ENCODE measurements at regions of chr9 and their contacts with region 1.

Region 1: GRCh38 chr9:126482361-126483044 is 131.2 kb upstream of the LMX1B start:
- DNase-seq: no peak
- ATAC-seq: no peak
- H3K4me3 ChIP-seq: no peak overlapping the region
- H3K27ac ChIP-seq: no peak overlapping the region
- H3K4me1 ChIP-seq: no peaks in the 10 kb centered on the region
- H3K27me3 ChIP-seq: peaks cover 0 to 3% of the 10 kb centered on the region in 2 experiments
- CTCF ChIP-seq: no peak
- EP300 ChIP-seq: no peak
- POLR2A ChIP-seq: no peak
- RAD21 ChIP-seq: no peak

Region 2: DNA sequence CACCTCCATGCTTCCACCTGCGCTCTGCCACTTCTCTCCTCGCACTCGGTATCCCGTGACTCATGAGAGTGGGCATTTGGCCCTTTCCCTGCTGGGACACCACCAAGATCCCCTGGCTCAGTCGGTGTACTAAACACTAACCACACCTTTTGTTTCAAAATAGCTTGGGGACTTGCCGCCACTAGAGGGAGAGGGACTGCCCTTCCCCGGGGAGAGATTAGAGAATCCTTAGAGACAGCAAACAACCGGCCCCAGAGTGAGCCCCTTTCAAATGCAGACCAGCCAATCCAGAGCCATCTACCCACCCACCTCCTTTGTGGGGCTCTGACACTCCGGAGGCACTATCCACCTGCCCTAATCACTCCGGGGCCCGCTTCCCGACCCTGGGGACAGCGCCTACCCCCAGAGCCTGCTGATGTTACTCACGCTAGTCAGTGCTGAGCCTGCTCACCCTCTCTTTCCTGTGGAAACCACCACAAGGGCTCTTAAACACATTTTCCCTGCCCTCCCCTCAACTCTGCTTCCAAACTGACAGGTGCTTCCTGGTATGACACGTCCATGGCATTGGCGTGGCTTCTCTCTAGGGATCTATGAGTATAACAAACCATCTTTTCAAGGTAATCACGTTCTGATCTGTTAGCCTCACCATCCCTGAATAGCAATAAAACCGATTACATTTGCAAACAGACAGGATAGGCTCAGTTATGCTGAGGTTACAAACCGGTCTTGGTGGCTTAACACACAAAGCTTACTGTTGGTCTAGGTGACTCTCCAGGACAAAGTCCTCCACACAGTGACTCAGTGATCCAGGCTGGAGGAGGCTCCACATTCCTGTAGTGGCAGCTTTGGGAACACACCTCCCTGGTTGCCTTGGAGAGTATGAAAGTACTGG is 336.0 kb before region 1 on chr9:
- CTCF ChIA-PET with region 1: no interaction called
- POLR2A ChIA-PET with region 1: no interaction called
- RAD21 ChIA-PET with region 1: no interaction called
- SMC1A ChIA-PET with region 1: no interaction called
- in situ Hi-C with region 1: loop called (anchors 10 kb)
- intact Hi-C with region 1: no loop called
- DNase-seq: peak; percentile 15
- ATAC-seq: peak; percentile 90
- H3K4me3 ChIP-seq: no peak overlapping the region
- H3K27ac ChIP-seq: no peak overlapping the region
- H3K4me1 ChIP-seq: no peaks in the 10 kb centered on the region
- H3K27me3 ChIP-seq: no peaks in the 10 kb centered on the region; a peak in 1 of 4 replicates
- CTCF ChIP-seq: peak; percentile 48 to 55 (median 48)
- EP300 ChIP-seq: no peak
- POLR2A ChIP-seq: no peak
- RAD21 ChIP-seq: peak; percentile 35; the same call in 1 of the 2 replicates

Measured in GM12878 (cell line).